PC-9 (cell line): ENCODE measurements at regions of chr18 and their contacts with region 1.

Region 1: GRCh38 chr18:9779630-9780029 is 71.5 kb downstream of the RAB31 start:
- DNase-seq: peak; percentile 53 to 90
- H3K4me3 ChIP-seq: no peak overlapping the region
- H3K27ac ChIP-seq: peak overlapping the region; percentile 79
- H3K4me1 ChIP-seq: peaks cover 52% of the 10 kb centered on the region
- H3K27me3 ChIP-seq: no peaks in the 10 kb centered on the region
- CTCF ChIP-seq: no peak

Region 2: DNA sequence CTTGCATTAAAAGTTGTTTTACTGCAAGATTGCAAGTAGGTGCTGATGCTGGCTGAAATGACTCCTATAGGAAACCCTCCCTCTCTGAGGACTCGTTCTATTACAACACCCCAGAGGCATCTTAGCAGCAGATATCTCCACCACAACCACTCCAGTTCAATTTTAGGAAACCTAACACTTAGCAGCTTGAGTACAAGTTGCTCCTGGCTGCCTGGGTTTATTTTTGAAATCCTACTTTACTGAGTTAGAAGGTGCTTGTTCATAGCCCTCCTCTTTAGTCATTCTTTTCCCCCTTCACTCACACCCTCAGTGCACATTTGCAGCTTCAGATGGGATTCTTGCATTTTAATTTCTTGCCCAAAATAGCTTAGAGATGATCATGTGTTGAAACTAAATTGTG is 962.8 kb before region 1 on chr18:
- CTCF ChIA-PET with region 1: no interaction called
- POLR2A ChIA-PET with region 1: no interaction called
- intact Hi-C with region 1: no loop called
- DNase-seq: no peak
- H3K4me3 ChIP-seq: no peak overlapping the region
- H3K27ac ChIP-seq: no peak overlapping the region
- H3K4me1 ChIP-seq: no peaks in the 10 kb centered on the region
- H3K27me3 ChIP-seq: no peaks in the 10 kb centered on the region
- CTCF ChIP-seq: no peak

Region 3: GRCh38 chr18:9803698-9804516 is 24.3 kb after region 1 on chr18:
- CTCF ChIA-PET with region 1: no interaction called
- POLR2A ChIA-PET with region 1: no interaction called
- intact Hi-C with region 1: no loop called
- DNase-seq: no peak
- H3K4me3 ChIP-seq: no peak overlapping the region
- H3K27ac ChIP-seq: no peak overlapping the region
- H3K4me1 ChIP-seq: peaks cover 23% of the 10 kb centered on the region
- H3K27me3 ChIP-seq: no peaks in the 10 kb centered on the region
- CTCF ChIP-seq: no peak

Region 4: GRCh38 chr18:9876867-9877654 is 97.4 kb after region 1 on chr18:
- CTCF ChIA-PET with region 1: no interaction called
- POLR2A ChIA-PET with region 1: no interaction called
- intact Hi-C with region 1: loop called (anchors 1 kb)
- DNase-seq: peak; percentile 57 to 96
- H3K4me3 ChIP-seq: peak overlapping the region; percentile 52
- H3K27ac ChIP-seq: peak overlapping the region; percentile 97
- H3K4me1 ChIP-seq: peaks cover 34% of the 10 kb centered on the region
- H3K27me3 ChIP-seq: no peaks in the 10 kb centered on the region
- CTCF ChIP-seq: no peak

Region 5: DNA sequence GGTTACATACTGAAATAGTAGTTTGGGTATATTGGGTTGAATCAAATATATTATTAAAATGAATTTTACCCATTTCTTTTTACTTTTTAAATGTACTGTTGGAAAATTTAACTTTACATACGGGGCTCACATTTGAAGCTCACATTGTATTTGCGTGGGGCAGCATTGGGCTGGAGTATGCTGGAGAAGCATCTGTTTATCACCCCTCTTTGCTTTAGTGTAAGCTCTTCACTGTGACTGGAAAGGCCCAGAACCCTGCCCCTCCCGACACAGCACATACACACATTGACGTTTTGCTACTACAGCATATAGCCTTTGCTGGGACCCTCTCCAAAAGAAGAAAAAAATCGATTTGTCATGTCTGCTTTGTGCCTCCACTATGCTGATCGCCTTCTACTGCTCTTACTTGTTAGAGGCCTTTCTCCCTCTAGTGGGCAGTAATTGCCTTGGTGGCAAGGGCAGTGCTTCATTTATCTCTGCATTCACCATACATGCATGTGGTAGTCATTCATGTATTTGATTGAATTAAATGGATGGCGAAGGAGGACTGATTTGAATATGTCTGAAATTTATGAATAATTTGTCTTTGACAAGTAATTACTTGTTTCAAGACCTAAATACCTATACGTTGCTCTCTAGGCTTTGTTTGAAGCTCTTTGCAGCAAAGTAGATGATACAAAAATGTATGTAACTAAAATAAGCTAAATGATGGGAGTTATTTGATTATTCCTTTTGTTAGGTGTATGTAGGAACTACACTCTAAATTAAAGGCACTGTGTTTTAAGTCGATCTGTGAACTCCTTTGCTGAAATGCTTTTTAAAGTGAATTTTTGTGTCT is 171.6 kb after region 1 on chr18:
- CTCF ChIA-PET with region 1: no interaction called
- POLR2A ChIA-PET with region 1: no interaction called
- intact Hi-C with region 1: loop called (anchors 5 kb)
- DNase-seq: peak; percentile 22 to 46
- H3K4me3 ChIP-seq: no peak overlapping the region
- H3K27ac ChIP-seq: 0 out of 2 replicates have a peak overlapping the region, but pooled peaks have one; percentile 20
- H3K4me1 ChIP-seq: no peaks in the 10 kb centered on the region; the same call in 1 of the 2 replicates
- H3K27me3 ChIP-seq: no peaks in the 10 kb centered on the region
- CTCF ChIP-seq: peak; percentile 73